ENCODE measurements at regions of chr19 and their contacts with region 1.

Region 1: GRCh38 chr19:16659831-16660708 is at the start of gene SMIM7:
- DNase-seq: peak; percentile 96
- ATAC-seq: peak; percentile 96
- H3K4me3 Mint-ChIP-seq: peak within 1 kb of the TSS; percentile 97
- H3K27ac Mint-ChIP-seq: peak within 1 kb of the TSS; percentile 95
- H3K4me1 Mint-ChIP-seq: peaks cover 50% of the 10 kb centered on the region
- H3K27me3 Mint-ChIP-seq: no peaks in the 10 kb centered on the region
- CTCF ChIP-seq: no peak
- total RNA-seq, gene SMIM7: 90.2 and 110 TPM in 2 replicates

Region 2: DNA sequence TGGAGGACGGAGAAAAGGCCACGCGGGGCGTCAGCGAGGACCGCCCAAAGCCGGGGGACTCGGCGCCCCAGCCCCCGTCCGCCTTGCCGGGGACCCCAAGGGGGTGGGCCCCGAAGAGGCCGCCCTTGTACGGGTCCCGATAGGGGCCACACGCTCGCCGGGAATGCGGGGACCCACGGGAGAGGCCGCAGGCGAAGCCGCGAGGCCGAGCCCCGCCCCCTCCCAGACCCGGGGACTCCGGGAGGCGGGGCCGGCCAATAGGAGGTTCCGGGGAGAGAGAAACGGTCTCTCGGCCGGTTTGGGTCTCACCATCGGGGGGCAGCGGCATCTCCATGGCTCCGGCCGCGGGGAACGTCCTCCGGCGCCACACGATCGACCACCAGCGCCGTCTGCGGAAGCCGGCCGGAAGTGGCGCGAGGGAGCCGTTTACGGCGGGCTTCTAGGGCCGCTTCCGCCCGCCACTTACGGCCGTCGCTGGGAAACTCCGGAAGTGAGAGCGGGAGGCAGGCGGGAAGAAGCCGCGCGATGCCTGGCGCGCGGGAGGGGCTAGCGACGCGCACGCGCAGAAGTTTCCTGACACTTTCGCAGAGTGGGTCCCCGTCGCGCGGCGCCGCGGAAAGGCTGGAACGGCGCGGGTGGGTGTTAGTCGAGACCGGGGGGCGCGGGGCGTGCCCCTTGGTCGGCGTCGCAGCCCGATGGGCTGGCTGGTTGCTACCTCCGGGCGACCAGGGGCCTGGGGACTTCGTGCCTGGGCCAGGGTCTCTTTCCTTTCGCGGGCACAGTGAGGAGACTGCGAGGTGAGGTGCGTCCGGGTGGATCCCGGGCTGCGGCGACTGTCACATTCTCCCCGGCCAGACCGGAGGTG is 117.8 kb before region 1 on chr19 and contains the start of gene CHERP:
- CTCF ChIA-PET with region 1: no interaction called
- POLR2A ChIA-PET with region 1: interaction called, 5 read pairs
- intact Hi-C with region 1: loop called (anchors 1 kb)
- DNase-seq: peak; percentile 93
- ATAC-seq: peak; percentile 82
- H3K4me3 Mint-ChIP-seq: peak within 1 kb of the TSS; percentile 86
- H3K27ac Mint-ChIP-seq: peak within 1 kb of the TSS; percentile 76
- H3K4me1 Mint-ChIP-seq: peaks cover 61% of the 10 kb centered on the region
- H3K27me3 Mint-ChIP-seq: no peaks in the 10 kb centered on the region
- CTCF ChIP-seq: no peak
- total RNA-seq, gene CHERP: 70.9 and 89.3 TPM in 2 replicates

Region 3: DNA sequence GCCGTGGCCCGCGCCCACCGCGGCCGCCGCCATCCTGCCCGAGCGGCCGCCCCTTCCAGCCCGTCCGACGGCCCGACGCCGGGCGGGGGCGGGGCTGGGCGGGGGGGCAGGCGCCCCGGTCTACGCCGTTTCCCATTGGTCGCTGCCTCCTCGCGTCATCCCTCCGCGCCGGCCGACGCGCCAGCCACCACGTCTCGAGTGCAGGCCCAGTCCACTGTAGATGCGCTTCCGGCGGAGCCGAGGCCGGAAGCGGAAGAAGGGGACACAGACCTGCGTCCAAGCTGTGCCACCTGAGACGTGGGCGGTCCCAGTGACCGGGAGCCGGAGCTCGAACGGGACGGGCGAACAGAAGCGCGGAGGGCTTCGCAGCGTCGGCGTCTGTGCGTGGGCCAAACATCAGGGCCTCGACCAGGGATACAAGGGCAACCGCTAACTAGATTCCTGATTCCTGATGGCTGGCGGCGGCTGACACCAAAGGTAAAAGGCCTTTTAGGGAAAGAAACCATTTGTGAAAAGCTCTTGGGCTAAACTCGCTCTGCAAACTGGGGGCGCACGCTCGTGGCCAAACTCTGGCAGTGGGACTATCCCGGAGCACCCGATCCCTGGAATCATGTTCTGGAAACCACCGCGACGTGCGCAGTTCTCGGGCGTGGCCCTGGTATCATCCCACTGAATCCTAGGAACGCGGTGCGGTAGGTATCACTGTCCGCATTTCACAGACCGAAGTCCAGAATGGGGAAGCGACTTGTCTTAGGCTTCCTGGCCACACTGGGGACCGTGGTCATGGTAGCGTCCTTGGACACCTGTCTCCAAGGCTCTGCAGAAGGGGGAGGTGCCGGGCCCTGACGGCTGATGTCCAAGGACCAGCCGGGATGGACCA is 87.5 kb before region 1 on chr19 and contains the start of gene SLC35E1:
- CTCF ChIA-PET with region 1: interaction called, 4 read pairs
- POLR2A ChIA-PET with region 1: interaction called, 13 read pairs
- intact Hi-C with region 1: loop called (anchors 1 kb)
- DNase-seq: peak; percentile 88
- ATAC-seq: peak; percentile 93
- H3K4me3 Mint-ChIP-seq: peak within 1 kb of the TSS; percentile 94
- H3K27ac Mint-ChIP-seq: peak within 1 kb of the TSS; percentile 92
- H3K4me1 Mint-ChIP-seq: peaks cover 49% of the 10 kb centered on the region
- H3K27me3 Mint-ChIP-seq: no peaks in the 10 kb centered on the region
- CTCF ChIP-seq: no peak
- total RNA-seq, gene SLC35E1: 41.6 and 51.7 TPM in 2 replicates

Region 4: GRCh38 chr19:16608290-16608739 is 51.8 kb before region 1 on chr19:
- CTCF ChIA-PET with region 1: no interaction called
- POLR2A ChIA-PET with region 1: interaction called, 15 read pairs
- intact Hi-C with region 1: no loop called
- DNase-seq: no peak
- ATAC-seq: no peak
- H3K4me3 Mint-ChIP-seq: no peak overlapping the region
- H3K27ac Mint-ChIP-seq: peak overlapping the region; percentile 64
- H3K4me1 Mint-ChIP-seq: peaks cover 83% of the 10 kb centered on the region
- H3K27me3 Mint-ChIP-seq: no peaks in the 10 kb centered on the region
- CTCF ChIP-seq: no peak

Region 5: DNA sequence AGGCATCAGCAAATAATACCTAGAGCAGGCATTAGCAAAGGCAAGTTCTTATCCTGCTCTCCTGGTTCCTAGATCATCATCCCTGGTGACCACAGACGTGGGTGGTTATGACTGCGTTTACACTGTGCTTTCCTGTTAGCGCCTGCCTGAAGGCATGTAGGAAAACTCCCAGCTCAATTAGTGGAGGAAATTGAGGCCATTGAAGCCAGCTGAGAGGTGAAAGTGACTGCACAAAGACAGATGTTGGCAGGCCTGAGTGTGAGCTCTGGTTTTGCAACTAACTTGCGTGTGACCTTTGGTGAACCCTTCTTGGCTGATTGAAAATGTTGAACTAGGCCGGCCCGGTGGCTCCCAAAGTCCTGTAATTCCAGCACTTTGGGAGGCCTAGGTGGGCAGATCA is 42.0 kb after region 1 on chr19:
- CTCF ChIA-PET with region 1: no interaction called
- POLR2A ChIA-PET with region 1: no interaction called
- intact Hi-C with region 1: no loop called
- DNase-seq: no peak
- ATAC-seq: no peak
- H3K4me3 Mint-ChIP-seq: no peak overlapping the region
- H3K27ac Mint-ChIP-seq: no peak overlapping the region
- H3K4me1 Mint-ChIP-seq: no peaks in the 10 kb centered on the region
- H3K27me3 Mint-ChIP-seq: no peaks in the 10 kb centered on the region
- CTCF ChIP-seq: no peak

Region 6: DNA sequence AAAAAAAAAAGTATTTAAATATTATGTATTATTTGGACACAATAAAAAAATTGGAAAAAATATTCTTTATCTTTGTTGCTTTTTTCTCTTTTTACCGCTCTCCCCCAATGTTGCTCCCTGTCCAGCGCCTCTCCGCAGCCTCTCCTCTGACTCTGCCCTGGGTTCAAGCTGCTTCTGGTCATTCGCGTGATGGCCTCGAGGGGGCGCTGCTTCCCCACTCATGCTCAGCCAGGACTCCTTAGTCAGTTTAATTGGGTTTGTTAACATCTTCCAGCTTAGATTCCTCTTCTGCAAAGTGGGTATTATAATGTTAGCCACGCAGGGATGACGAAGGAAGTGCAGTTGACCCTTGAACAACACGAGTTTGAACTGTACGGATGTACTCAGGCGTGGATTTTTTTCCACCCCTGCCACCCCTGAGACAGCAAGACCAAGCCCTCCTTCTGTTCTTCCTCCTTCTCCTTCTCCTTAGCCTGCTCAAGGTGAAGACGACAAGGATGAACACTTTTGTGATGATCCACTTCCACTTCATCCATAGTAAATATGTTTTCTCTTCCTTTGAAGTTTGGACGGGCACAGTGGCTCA is 54.7 kb after region 1 on chr19:
- CTCF ChIA-PET with region 1: no interaction called
- POLR2A ChIA-PET with region 1: interaction called, 12 read pairs
- intact Hi-C with region 1: loop called (anchors 2 kb)
- DNase-seq: peak; percentile 47
- ATAC-seq: peak; percentile 20
- H3K4me3 Mint-ChIP-seq: peak overlapping the region; percentile 42
- H3K27ac Mint-ChIP-seq: peak overlapping the region; percentile 81
- H3K4me1 Mint-ChIP-seq: peaks cover 54% of the 10 kb centered on the region
- H3K27me3 Mint-ChIP-seq: no peaks in the 10 kb centered on the region
- CTCF ChIP-seq: peak; percentile 94

Region 7: DNA sequence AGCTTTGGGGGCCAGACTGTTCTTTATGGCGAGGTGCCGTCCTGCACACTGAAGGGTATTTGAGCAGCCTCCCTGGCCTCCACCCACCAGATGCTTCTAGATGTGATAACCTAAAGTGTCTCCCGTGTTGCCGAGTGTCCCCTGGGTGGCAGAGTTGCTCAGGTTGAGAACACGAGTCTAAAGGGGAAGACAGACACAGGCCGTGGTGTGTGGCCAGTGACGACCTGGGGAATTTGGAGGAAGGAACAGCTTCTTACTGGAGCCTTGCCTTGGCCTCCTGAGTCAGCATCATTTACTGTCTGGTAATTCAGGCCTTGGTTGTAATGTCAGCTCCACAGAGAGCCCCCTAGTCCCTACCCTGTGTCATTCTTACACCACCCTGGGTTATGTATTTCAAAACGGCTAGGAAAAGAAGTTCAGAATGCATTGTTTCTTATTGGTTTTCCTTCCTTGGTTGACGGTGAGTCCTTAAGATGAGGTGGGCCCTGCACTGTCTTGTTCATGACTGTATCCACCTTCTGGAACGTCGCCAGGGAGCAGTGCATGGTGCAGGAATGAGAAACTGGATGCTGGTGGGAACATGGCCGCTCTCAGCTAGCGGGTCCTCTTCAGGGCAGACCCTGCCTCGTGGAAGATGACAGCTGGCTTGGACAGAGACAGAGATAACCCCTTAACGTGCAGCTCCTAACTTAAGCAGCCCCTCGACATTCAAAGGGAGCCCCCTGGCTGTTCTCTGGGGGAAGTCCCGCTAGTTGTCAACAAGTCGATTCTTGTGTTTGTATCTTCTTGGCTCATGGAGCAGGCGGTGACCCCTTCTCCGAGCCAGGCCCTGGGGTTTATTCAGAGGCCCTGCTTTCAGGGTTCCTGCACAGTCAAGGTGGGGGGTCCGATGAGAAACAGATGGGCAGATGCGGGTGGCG is 176.3 kb after region 1 on chr19:
- CTCF ChIA-PET with region 1: no interaction called
- POLR2A ChIA-PET with region 1: interaction called, 13 read pairs
- intact Hi-C with region 1: no loop called
- DNase-seq: peak; percentile 29
- ATAC-seq: peak; percentile 81
- H3K4me3 Mint-ChIP-seq: no peak overlapping the region
- H3K27ac Mint-ChIP-seq: peak overlapping the region; percentile 80
- H3K4me1 Mint-ChIP-seq: peaks cover 42% of the 10 kb centered on the region
- H3K27me3 Mint-ChIP-seq: no peaks in the 10 kb centered on the region
- CTCF ChIP-seq: no peak

Measured in activated B cell treated with CpG ODN at 0.5 μM for 24 hours (primary cell).